ENCODE measurements at regions of chr2 and their contacts with region 1.

Region 1: DNA sequence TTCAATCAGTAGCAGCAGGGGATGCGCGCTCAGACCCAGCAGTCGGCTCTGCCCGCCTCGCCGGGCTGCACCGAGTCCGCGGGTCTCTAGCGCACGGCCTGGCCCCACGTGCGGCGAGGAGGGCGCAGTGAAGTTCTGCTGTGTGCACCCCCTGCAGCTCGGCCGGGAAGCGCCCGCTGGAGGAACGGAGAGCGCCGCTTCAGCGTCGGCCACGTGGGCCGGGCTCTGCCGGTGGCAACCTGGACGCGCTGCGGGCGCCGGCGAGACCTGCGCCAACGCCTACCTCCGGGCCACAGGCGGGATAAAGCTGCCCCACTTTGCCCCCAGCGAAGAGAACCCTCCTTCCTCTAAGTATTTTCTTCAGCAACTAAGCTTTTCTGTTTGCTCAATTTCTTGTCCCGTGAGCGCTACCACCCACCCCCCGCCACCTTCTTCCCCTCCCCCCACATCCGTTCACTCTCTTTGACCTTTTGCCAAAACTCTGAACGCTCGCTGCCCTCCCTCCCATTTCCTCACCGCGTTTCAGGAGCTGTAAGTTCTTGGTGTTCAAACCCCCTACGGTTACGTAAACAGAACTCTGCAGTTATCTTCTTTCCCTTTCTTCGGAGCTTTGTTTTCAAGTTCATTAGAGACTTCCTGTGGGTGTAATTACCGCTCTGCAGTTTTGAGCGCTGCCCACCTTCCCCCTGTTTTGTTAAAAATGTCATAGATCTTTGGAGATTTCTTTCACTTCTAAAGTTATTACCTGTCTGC is 42.6 kb upstream of the EDAR start:
- DNase-seq: peak; percentile 51 to 96 (median 84)
- ATAC-seq: peak; percentile 72 to 83
- H3K4me3 Mint-ChIP-seq: peak overlapping the region; percentile 51 to 90 (median 72)
- H3K27ac Mint-ChIP-seq: peak overlapping the region; percentile 84 to 99 (median 97)
- H3K4me1 Mint-ChIP-seq: peaks cover 25 to 83% (median 72%) of the 10 kb centered on the region in 4 donors
- H3K27me3 Mint-ChIP-seq: no peaks in the 10 kb centered on the region

Region 2: GRCh38 chr2:108965540-108966236 is 66.0 kb before region 1 on chr2:
- POLR2A ChIA-PET with region 1: interaction called, 23 read pairs
- DNase-seq: peak; percentile 22 to 84 (median 62)
- ATAC-seq: peak; percentile 91 to 94
- H3K4me3 Mint-ChIP-seq: peak overlapping the region; percentile 74 to 90 (median 86)
- H3K27ac Mint-ChIP-seq: peak overlapping the region; percentile 71 to 91 (median 87)
- H3K4me1 Mint-ChIP-seq: peaks cover 54 to 95% (median 88%) of the 10 kb centered on the region in 4 donors
- H3K27me3 Mint-ChIP-seq: no peaks in the 10 kb centered on the region

Region 3: GRCh38 chr2:108998911-108999310 is 32.7 kb before region 1 on chr2:
- POLR2A ChIA-PET with region 1: interaction called, 39 read pairs
- DNase-seq: no peak
- ATAC-seq: no peak
- H3K4me3 Mint-ChIP-seq: no peak overlapping the region
- H3K27ac Mint-ChIP-seq: peak overlapping the region in 1 of 10 donors; percentile 5
- H3K4me1 Mint-ChIP-seq: peaks cover 19 to 38% (median 26%) of the 10 kb centered on the region in 4 donors
- H3K27me3 Mint-ChIP-seq: no peaks in the 10 kb centered on the region

Region 4: DNA sequence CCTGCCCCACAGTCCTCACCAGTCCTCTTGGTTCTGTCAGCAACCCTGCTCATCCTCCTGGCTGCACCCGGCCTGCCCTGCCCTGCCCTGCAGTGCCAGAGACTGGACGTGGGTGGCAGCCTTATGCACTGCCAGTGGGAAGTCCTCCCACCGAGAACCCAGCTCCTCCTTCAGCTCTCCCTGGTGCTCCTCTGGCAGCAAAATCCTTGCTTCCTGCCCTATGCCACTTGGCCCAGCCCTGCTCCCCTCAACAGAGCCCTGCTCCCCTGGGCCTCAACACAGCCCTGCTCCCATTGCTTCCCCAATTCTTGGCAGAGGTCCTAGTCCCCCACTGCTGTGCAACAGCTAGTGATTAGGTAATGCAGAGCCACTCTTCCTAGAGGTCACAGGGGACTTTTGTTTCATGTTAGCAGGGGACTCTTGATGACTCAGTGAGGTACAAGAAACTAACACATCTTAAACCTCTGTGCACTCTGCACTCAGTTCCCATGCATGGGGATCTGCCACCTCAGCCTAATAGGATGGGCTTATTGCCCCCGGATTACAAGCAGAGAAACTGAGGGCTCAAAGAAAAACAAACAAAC is 15.4 kb after region 1 on chr2:
- POLR2A ChIA-PET with region 1: interaction called, 52 read pairs
- DNase-seq: no peak
- ATAC-seq: peak in 1 of 2 donors; percentile 61
- H3K4me3 Mint-ChIP-seq: peak overlapping the region in 7 of 10 donors; percentile 12 to 81 (median 66)
- H3K27ac Mint-ChIP-seq: peak overlapping the region in 8 of 10 donors; percentile 10 to 91 (median 56)
- H3K4me1 Mint-ChIP-seq: peaks cover 18 to 59% (median 32%) of the 10 kb centered on the region in 4 donors
- H3K27me3 Mint-ChIP-seq: no peaks in the 10 kb centered on the region

Region 5: DNA sequence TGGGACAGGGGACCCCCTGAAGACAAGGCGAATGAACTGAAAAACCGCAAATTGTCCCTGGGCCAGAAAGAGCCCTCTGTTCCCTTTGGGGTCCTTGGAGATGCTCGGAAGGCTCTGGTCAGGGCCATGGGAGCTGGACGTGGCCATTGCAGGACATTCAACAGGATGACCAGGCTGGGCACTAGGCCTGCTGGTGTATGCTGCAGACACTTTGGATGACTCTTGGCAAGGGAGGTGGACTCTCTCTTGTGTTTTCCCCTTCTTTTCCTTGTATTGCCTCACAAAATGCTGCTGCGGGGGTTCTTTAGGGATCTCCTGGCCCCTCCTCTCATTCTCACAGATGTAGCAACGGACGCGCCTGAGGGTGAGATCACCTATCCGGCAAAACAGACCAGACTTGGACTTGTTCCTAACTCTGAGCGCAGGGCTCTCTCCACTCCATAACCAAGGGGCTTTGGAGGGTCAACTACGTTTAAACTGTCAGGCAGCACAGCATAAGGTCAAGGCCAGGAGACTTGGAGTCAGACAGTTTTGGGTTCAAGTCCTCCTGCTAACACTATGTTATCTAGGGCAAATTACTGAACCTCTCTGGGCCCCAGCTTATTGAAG is 55.5 kb after region 1 on chr2:
- POLR2A ChIA-PET with region 1: no interaction called
- DNase-seq: no peak
- ATAC-seq: no peak
- H3K4me3 Mint-ChIP-seq: no peak overlapping the region
- H3K27ac Mint-ChIP-seq: peak overlapping the region in 2 of 10 donors; percentile 65 to 66
- H3K4me1 Mint-ChIP-seq: peaks cover 2 to 19% (median 13%) of the 10 kb centered on the region in 4 donors
- H3K27me3 Mint-ChIP-seq: no peaks in the 10 kb centered on the region

Region 6: GRCh38 chr2:109102588-109103233 is 71.1 kb after region 1 on chr2:
- POLR2A ChIA-PET with region 1: interaction called, 12 read pairs
- DNase-seq: peak in 4 of 10 donors; percentile 13 to 23 (median 18)
- ATAC-seq: peak; percentile 69 to 88
- H3K4me3 Mint-ChIP-seq: peak overlapping the region in 9 of 10 donors; percentile 10 to 71 (median 41)
- H3K27ac Mint-ChIP-seq: peak overlapping the region in 8 of 10 donors; percentile 6 to 77 (median 44)
- H3K4me1 Mint-ChIP-seq: peaks cover 20 to 38% (median 26%) of the 10 kb centered on the region in 4 donors
- H3K27me3 Mint-ChIP-seq: peaks cover 0 to 2% (median 0%) of the 10 kb centered on the region in 5 donors